CD4-positive, alpha-beta memory T cell (primary cell): ENCODE measurements at regions of chr11 and their contacts with region 1.

Region 1: DNA sequence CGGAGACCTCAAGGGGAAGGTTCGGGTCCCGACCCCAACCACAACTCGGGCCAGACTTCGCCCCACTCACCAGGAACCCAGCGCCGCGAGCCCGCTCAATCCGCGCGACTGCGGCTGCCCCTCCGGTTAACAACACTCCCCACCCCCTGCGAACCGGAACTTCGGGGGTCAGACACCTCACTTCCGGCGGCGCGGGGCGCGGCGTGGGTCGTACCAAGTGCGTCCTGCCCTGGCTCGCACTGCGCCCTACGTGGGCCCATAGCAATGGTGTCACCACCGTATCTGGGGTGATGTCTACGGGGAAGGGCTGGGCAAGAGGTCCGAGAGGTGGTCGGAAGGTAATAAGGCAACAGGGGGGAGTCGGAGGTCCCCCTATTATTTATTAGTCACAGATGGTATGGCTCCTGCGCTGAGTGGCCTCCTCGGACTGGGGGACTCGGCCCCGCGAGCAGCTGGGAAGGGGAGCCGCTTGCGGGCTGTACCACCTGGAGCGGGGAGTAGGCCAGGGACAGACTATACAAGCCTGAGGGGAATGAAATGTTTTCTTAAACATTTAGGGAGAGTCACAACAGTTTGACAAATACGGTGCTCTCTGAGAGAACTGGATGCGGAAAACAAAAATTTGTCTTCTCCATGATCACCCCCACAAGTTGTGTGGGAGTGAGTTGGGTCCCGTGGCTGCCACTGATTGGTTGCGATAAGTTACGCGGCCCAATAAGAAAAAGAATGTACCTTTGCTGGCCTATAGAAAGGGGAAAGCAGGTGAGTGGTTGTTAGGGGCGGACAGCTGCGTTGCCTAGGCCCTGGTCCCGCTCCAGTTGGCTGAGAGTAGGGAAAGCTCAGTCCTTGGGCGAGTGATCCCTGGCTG is at the start of gene SYVN1:
- DNase-seq: peak; percentile 92 to 95 (median 94)
- H3K4me3 ChIP-seq: peak within 1 kb of the TSS; percentile 68 to 99
- H3K4me3 Mint-ChIP-seq: peak within 1 kb of the TSS; percentile 97 to 100 (median 98)
- H3K27ac ChIP-seq: peak within 1 kb of the TSS; percentile 99
- H3K27ac Mint-ChIP-seq: peak within 1 kb of the TSS; percentile 99 to 100 (median 100)
- H3K4me1 ChIP-seq: peaks cover 30% of the 10 kb centered on the region
- H3K4me1 Mint-ChIP-seq: peaks cover 23 to 48% (median 33%) of the 10 kb centered on the region in 4 donors
- H3K27me3 ChIP-seq: no peaks in the 10 kb centered on the region
- H3K27me3 Mint-ChIP-seq: no peaks in the 10 kb centered on the region
- total RNA-seq, gene SYVN1: 74.0 to 76.5 TPM

Region 2: GRCh38 chr11:64924102-64924851 is 210.3 kb before region 1 on chr11 and contains the start of gene PPP2R5B:
- CTCF ChIA-PET with region 1: no interaction called
- POLR2A ChIA-PET with region 1: interaction called, 17 read pairs
- intact Hi-C with region 1: no loop called
- DNase-seq: peak; percentile 87 to 95 (median 90)
- H3K4me3 ChIP-seq: peak within 1 kb of the TSS; percentile 61 to 85
- H3K4me3 Mint-ChIP-seq: peak within 1 kb of the TSS; percentile 93 to 99 (median 96)
- H3K27ac ChIP-seq: peak within 1 kb of the TSS; percentile 78
- H3K27ac Mint-ChIP-seq: peak within 1 kb of the TSS; percentile 98 to 100 (median 99)
- H3K4me1 ChIP-seq: peaks cover 20% of the 10 kb centered on the region
- H3K4me1 Mint-ChIP-seq: peaks cover 9 to 15% (median 11%) of the 10 kb centered on the region in 4 donors
- H3K27me3 ChIP-seq: no peaks in the 10 kb centered on the region
- H3K27me3 Mint-ChIP-seq: no peaks in the 10 kb centered on the region
- total RNA-seq, gene PPP2R5B: 14.0 to 15.8 TPM

Region 3: DNA sequence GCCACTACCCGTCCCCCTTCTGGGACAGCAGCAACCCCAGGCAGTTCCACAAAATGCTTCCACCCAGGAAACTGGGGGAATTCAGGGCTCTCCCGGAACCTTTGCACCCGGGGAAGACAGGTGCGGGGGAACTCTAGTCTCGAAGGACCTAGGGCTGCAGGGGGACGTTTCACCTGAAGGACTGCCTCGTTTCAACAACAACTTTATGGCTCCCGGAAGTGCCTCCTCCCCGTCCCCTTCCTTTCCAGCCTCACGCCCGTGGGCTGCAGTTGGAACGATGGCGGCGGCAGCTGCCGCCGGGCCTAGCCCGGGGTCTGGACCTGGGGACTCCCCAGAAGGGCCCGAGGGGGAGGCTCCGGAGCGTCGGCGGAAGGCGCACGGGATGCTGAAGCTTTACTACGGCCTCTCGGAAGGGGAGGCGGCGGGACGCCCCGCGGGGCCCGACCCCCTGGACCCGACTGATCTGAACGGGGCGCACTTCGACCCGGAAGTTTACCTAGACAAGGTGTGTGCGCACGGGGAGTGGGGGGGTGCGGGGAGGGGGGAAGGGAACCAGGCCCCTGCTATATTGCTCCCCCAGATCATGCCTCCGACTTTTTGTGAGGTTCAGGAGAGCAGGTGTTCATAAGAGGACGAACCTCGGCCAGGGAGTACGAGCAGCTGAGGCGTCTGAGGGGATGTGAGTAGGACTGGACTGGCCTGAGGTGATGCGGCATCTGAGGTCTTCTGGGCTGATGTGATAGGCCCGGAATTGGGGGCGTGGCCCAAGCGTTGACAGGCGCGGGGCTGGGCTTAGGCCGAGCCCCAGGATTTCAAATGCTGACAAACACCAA is 38.4 kb before region 1 on chr11 and contains the start of gene VPS51:
- CTCF ChIA-PET with region 1: no interaction called
- POLR2A ChIA-PET with region 1: interaction called, 38 read pairs
- intact Hi-C with region 1: no loop called
- DNase-seq: peak; percentile 87 to 92 (median 89)
- H3K4me3 ChIP-seq: peak within 1 kb of the TSS; percentile 47 to 74
- H3K4me3 Mint-ChIP-seq: peak within 1 kb of the TSS; percentile 86 to 95 (median 93)
- H3K27ac ChIP-seq: peak within 1 kb of the TSS; percentile 78
- H3K27ac Mint-ChIP-seq: peak within 1 kb of the TSS; percentile 95 to 97 (median 96)
- H3K4me1 ChIP-seq: peaks cover 18% of the 10 kb centered on the region
- H3K4me1 Mint-ChIP-seq: peaks cover 8 to 26% (median 17%) of the 10 kb centered on the region in 4 donors
- H3K27me3 ChIP-seq: no peaks in the 10 kb centered on the region
- H3K27me3 Mint-ChIP-seq: no peaks in the 10 kb centered on the region
- total RNA-seq, gene VPS51: 221 to 226 TPM

Region 4: GRCh38 chr11:65180877-65181568 is 46.4 kb after region 1 on chr11:
- CTCF ChIA-PET with region 1: interaction called, 4 read pairs
- POLR2A ChIA-PET with region 1: interaction called, 45 read pairs
- intact Hi-C with region 1: loop called (anchors 1 kb)
- DNase-seq: peak; percentile 48 to 70 (median 54)
- H3K4me3 ChIP-seq: peak overlapping the region; percentile 61 to 70
- H3K4me3 Mint-ChIP-seq: peak overlapping the region; percentile 89 to 93 (median 90)
- H3K27ac ChIP-seq: peak overlapping the region; percentile 52
- H3K27ac Mint-ChIP-seq: peak overlapping the region in 6 of 7 donors; percentile 79 to 94 (median 87)
- H3K4me1 ChIP-seq: peaks cover 36% of the 10 kb centered on the region
- H3K4me1 Mint-ChIP-seq: peaks cover 11 to 37% (median 22%) of the 10 kb centered on the region in 4 donors
- H3K27me3 ChIP-seq: no peaks in the 10 kb centered on the region
- H3K27me3 Mint-ChIP-seq: no peaks in the 10 kb centered on the region

Region 5: DNA sequence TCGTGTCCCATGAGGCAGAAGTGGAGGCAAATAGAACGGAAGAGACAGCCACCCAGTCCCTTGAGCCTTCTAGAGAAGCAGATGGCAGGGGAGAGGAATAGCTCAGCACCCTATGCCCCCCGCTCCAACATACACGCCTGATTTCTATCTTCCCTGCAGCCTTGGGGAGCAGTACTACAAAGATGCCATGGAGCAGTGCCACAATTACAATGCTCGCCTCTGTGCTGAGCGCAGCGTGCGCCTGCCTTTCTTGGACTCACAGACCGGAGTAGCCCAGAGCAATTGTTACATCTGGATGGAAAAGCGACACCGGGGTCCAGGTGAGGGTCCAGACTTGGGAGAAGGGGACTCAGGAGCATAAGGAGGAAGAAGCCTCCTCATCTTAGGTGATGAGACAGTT is 205.6 kb after region 1 on chr11:
- CTCF ChIA-PET with region 1: no interaction called
- POLR2A ChIA-PET with region 1: no interaction called
- intact Hi-C with region 1: no loop called
- DNase-seq: no peak
- H3K4me3 ChIP-seq: no peak overlapping the region
- H3K4me3 Mint-ChIP-seq: no peak overlapping the region
- H3K27ac ChIP-seq: no peak overlapping the region
- H3K27ac Mint-ChIP-seq: peak overlapping the region in 3 of 7 donors; percentile 25 to 63 (median 40)
- H3K4me1 ChIP-seq: peaks cover 23% of the 10 kb centered on the region
- H3K4me1 Mint-ChIP-seq: peaks cover 22 to 40% (median 26%) of the 10 kb centered on the region in 4 donors
- H3K27me3 ChIP-seq: no peaks in the 10 kb centered on the region
- H3K27me3 Mint-ChIP-seq: no peaks in the 10 kb centered on the region